ENCODE measurements at regions of chr6 and their contacts with region 1.

Region 1: DNA sequence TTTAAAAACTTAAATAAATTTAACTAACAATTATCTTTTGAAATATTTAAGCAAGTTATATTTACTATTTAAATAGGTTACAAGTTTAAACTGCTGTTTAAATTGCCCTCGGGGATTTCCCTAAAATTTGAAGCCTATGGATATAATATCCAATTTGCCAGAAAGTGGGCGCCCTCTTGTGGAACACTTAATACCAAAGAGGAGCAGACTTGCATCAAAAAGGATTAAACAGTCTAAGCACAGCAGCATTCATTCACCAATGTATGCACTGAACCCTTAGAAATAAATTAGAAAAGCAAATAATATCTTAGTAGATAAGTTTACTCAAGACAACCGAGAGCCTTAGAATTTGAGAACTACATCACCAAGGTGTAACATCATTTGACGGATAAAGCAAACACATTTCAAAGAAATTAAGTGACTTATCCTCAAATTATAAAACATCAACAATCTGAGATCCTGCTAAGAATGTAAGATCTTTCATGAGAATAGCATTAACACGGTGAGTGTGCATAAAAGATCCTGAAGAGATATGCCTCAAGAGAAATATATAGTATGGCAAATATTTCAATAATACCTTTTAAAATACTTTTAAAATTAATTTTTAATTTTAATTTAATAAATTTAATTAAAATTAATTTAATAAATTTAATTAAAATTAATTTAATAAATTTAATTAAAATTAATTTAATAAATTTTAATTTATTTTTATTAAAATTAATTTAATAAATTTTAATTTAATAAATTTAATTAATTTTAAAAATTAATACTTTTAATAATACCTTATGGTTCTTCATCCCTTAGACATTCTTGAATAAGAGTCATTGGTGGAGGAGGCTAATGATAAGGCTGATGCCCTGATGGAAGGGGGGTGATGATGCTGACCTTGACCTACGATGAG is 11.5 kb upstream of the MEP1A start:
- DNase-seq: peak; percentile 24
- ATAC-seq: peak; percentile 89
- H3K4me3 ChIP-seq: no peak overlapping the region
- H3K27ac ChIP-seq: no peak overlapping the region
- H3K4me1 ChIP-seq: no peaks in the 10 kb centered on the region
- H3K27me3 ChIP-seq: no peaks in the 10 kb centered on the region
- CTCF ChIP-seq: peak; percentile 80; the same call in 1 of the 2 replicates

Region 2: DNA sequence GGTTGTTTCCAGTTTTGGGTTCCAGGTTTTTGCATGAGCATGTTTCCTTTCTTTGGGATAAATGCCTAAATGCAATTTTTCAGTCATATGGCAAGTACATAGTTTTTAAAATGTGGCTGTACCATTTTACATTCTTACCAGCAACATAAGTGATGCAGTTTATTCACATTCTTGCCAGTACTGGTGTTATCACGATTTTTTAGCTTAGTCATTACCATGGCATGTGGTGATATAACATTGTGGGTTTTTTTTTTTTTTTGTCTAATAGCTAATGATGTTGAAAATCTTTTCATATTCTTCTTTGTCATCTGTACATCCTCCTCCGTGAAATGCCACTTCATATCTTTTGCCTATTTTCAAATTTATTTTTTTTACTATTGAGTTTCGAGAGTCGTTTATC is 97.0 kb before region 1 on chr6:
- CTCF ChIA-PET with region 1: no interaction called
- POLR2A ChIA-PET with region 1: no interaction called
- in situ Hi-C with region 1: no loop called
- intact Hi-C with region 1: no loop called
- DNase-seq: no peak
- ATAC-seq: no peak
- H3K4me3 ChIP-seq: no peak overlapping the region
- H3K27ac ChIP-seq: no peak overlapping the region
- H3K4me1 ChIP-seq: no peaks in the 10 kb centered on the region
- H3K27me3 ChIP-seq: no peaks in the 10 kb centered on the region
- CTCF ChIP-seq: no peak

Region 3: GRCh38 chr6:46704562-46704961 is 77.2 kb before region 1 on chr6:
- CTCF ChIA-PET with region 1: no interaction called
- POLR2A ChIA-PET with region 1: no interaction called
- in situ Hi-C with region 1: no loop called
- intact Hi-C with region 1: loop called (anchors 2 kb)
- DNase-seq: no peak
- ATAC-seq: 0 out of 2 replicates have a peak, but pooled peaks have one; percentile 62
- H3K4me3 ChIP-seq: no peak overlapping the region
- H3K27ac ChIP-seq: no peak overlapping the region
- H3K4me1 ChIP-seq: no peaks in the 10 kb centered on the region
- H3K27me3 ChIP-seq: no peaks in the 10 kb centered on the region
- CTCF ChIP-seq: peak; percentile 21; the same call in 1 of the 2 replicates

Measured in Panc1 (cell line).